AG04449 (cell line): ENCODE measurements at regions of chr11 and their contacts with region 1.

Region 1: GRCh38 chr11:130462101-130462885 is 13.8 kb downstream of the ADAMTS15 start:
- DNase-seq: no peak
- H3K4me3 ChIP-seq: no peak overlapping the region
- CTCF ChIP-seq: no peak

Region 2: GRCh38 chr11:130448416-130449309 is 13.6 kb before region 1 on chr11 and contains the start of gene ADAMTS15:
- CTCF ChIA-PET with region 1: interaction called, 10 read pairs
- POLR2A ChIA-PET with region 1: no interaction called
- DNase-seq: no peak
- H3K4me3 ChIP-seq: peak within 1 kb of the TSS; percentile 66
- CTCF ChIP-seq: no peak